AG04450 (cell line): ENCODE measurements at regions of chr1 and their contacts with region 1.

Region 1: GRCh38 chr1:20493839-20494608 is 8.0 kb upstream of the CAMK2N1 start:
- DNase-seq: peak; percentile 79
- H3K4me3 ChIP-seq: no peak overlapping the region
- H3K27ac ChIP-seq: peak overlapping the region; percentile 70
- H3K27me3 ChIP-seq: no peaks in the 10 kb centered on the region
- CTCF ChIP-seq: peak; percentile 99

Region 2: GRCh38 chr1:19974822-19975416 is 519.1 kb before region 1 on chr1:
- CTCF ChIA-PET with region 1: interaction called, 11 read pairs
- POLR2A ChIA-PET with region 1: no interaction called
- DNase-seq: peak; percentile 42
- H3K4me3 ChIP-seq: no peak overlapping the region; the same call in 1 of the 2 replicates
- H3K27ac ChIP-seq: no peak overlapping the region
- H3K27me3 ChIP-seq: peaks cover 16% of the 10 kb centered on the region
- CTCF ChIP-seq: peak; percentile 99

Region 3: GRCh38 chr1:20361806-20362640 is 132.0 kb before region 1 on chr1:
- CTCF ChIA-PET with region 1: interaction called, 17 read pairs
- POLR2A ChIA-PET with region 1: interaction called, 9 read pairs
- DNase-seq: no peak
- H3K4me3 ChIP-seq: no peak overlapping the region
- H3K27ac ChIP-seq: no peak overlapping the region
- H3K27me3 ChIP-seq: peaks cover 52% of the 10 kb centered on the region
- CTCF ChIP-seq: peak; percentile 84

Region 4: GRCh38 chr1:20470194-20470593 is 23.8 kb before region 1 on chr1:
- CTCF ChIA-PET with region 1: interaction called, 10 read pairs
- POLR2A ChIA-PET with region 1: no interaction called
- DNase-seq: no peak
- H3K4me3 ChIP-seq: no peak overlapping the region
- H3K27ac ChIP-seq: no peak overlapping the region
- H3K27me3 ChIP-seq: peaks cover 28% of the 10 kb centered on the region
- CTCF ChIP-seq: no peak

Region 5: DNA sequence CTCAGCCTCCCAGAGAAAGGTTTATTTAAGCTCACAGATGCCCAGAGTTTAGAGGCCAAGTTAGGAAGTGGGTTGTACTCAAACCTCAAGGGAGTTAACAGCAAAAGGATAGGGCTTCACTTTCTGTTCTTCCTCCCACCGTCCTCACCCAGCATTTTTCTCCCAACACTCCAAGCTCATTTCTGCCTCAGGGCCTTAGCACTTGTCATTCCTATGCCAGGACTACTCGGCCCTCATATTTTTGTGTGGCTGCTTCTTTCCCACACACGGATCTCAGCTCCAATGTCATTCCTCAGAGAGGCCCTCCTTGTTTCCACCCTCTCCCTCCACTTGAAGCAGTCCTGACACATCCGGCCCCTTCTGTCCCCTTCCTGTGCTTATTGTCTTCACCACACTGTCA is 71.2 kb after region 1 on chr1:
- CTCF ChIA-PET with region 1: no interaction called
- POLR2A ChIA-PET with region 1: no interaction called
- DNase-seq: no peak
- H3K4me3 ChIP-seq: no peak overlapping the region
- H3K27ac ChIP-seq: no peak overlapping the region
- H3K27me3 ChIP-seq: peaks cover 26% of the 10 kb centered on the region
- CTCF ChIP-seq: no peak